MCF 10A (cell line): ENCODE measurements at regions of chr1 and their contacts with region 1.

Region 1: GRCh38 chr1:115764541-115764940 is 4.0 kb downstream of the CASQ2 start:
- DNase-seq: peak; percentile 68
- H3K4me3 Mint-ChIP-seq: no peak overlapping the region
- H3K27ac Mint-ChIP-seq: no peak overlapping the region
- H3K4me1 Mint-ChIP-seq: no peaks in the 10 kb centered on the region
- H3K27me3 Mint-ChIP-seq: no peaks in the 10 kb centered on the region
- CTCF ChIP-seq: peak; percentile 63

Region 2: GRCh38 chr1:115544171-115544570 is 220.4 kb before region 1 on chr1:
- CTCF ChIA-PET with region 1: no interaction called
- POLR2A ChIA-PET with region 1: no interaction called
- intact Hi-C with region 1: no loop called
- DNase-seq: no peak
- H3K4me3 Mint-ChIP-seq: no peak overlapping the region
- H3K27ac Mint-ChIP-seq: no peak overlapping the region
- H3K4me1 Mint-ChIP-seq: peaks cover 15% of the 10 kb centered on the region
- H3K27me3 Mint-ChIP-seq: no peaks in the 10 kb centered on the region
- CTCF ChIP-seq: no peak

Region 3: GRCh38 chr1:115642168-115643072 is 122.1 kb before region 1 on chr1:
- CTCF ChIA-PET with region 1: interaction called, 25 read pairs
- POLR2A ChIA-PET with region 1: interaction called, 4 read pairs
- intact Hi-C with region 1: no loop called
- DNase-seq: peak; percentile 52
- H3K4me3 Mint-ChIP-seq: peak overlapping the region; percentile 68
- H3K27ac Mint-ChIP-seq: peak overlapping the region; percentile 59
- H3K4me1 Mint-ChIP-seq: peaks cover 13% of the 10 kb centered on the region
- H3K27me3 Mint-ChIP-seq: peaks cover 13% of the 10 kb centered on the region
- CTCF ChIP-seq: no peak

Region 4: GRCh38 chr1:115717541-115717940 is 47.0 kb before region 1 on chr1:
- CTCF ChIA-PET with region 1: interaction called, 21 read pairs
- POLR2A ChIA-PET with region 1: no interaction called
- intact Hi-C with region 1: no loop called
- DNase-seq: peak; percentile 67
- H3K4me3 Mint-ChIP-seq: no peak overlapping the region
- H3K27ac Mint-ChIP-seq: no peak overlapping the region
- H3K4me1 Mint-ChIP-seq: peaks cover 7% of the 10 kb centered on the region
- H3K27me3 Mint-ChIP-seq: no peaks in the 10 kb centered on the region
- CTCF ChIP-seq: peak; percentile 42

Region 5: GRCh38 chr1:115782571-115783281 is 18.2 kb after region 1 on chr1:
- CTCF ChIA-PET with region 1: interaction called, 4 read pairs
- POLR2A ChIA-PET with region 1: interaction called, 64 read pairs
- intact Hi-C with region 1: no loop called
- DNase-seq: peak; percentile 93
- H3K4me3 Mint-ChIP-seq: peak overlapping the region; percentile 54
- H3K27ac Mint-ChIP-seq: peak overlapping the region; percentile 99
- H3K4me1 Mint-ChIP-seq: peaks cover 34% of the 10 kb centered on the region
- H3K27me3 Mint-ChIP-seq: no peaks in the 10 kb centered on the region
- CTCF ChIP-seq: no peak

Region 6: DNA sequence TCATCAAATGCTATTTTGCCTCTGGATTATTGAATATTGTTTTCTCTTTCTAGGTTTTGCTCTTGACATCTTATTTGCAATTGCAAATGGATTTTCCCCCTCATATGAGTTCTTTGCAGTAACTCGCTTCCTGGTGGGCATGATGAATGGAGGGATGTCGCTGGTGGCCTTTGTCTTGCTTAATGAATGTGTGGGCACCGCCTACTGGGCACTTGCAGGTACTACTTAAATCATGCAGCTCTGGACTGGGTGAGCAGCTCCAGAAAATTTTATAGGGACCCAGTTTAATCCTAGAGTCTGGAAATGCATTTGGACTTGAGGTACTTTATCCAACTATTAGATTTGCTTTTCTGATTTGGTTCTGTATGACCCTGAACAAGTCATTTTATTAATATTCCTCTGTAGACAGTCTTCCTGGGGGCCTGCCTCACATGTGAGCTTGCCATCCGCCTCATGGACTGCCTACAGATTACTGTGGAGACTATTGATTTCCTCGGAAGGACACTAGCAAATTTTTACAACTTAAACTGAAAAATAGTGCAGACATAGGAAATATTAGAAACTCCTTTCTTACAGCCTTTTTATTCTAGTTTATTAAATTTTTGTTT is 256.2 kb after region 1 on chr1:
- CTCF ChIA-PET with region 1: interaction called, 12 read pairs
- POLR2A ChIA-PET with region 1: no interaction called
- intact Hi-C with region 1: no loop called
- DNase-seq: peak; percentile 75
- H3K4me3 Mint-ChIP-seq: no peak overlapping the region
- H3K27ac Mint-ChIP-seq: no peak overlapping the region
- H3K4me1 Mint-ChIP-seq: peaks cover 5% of the 10 kb centered on the region
- H3K27me3 Mint-ChIP-seq: no peaks in the 10 kb centered on the region
- CTCF ChIP-seq: peak; percentile 72